ENCODE measurements at regions of chr17 and their contacts with region 1.

Region 1: DNA sequence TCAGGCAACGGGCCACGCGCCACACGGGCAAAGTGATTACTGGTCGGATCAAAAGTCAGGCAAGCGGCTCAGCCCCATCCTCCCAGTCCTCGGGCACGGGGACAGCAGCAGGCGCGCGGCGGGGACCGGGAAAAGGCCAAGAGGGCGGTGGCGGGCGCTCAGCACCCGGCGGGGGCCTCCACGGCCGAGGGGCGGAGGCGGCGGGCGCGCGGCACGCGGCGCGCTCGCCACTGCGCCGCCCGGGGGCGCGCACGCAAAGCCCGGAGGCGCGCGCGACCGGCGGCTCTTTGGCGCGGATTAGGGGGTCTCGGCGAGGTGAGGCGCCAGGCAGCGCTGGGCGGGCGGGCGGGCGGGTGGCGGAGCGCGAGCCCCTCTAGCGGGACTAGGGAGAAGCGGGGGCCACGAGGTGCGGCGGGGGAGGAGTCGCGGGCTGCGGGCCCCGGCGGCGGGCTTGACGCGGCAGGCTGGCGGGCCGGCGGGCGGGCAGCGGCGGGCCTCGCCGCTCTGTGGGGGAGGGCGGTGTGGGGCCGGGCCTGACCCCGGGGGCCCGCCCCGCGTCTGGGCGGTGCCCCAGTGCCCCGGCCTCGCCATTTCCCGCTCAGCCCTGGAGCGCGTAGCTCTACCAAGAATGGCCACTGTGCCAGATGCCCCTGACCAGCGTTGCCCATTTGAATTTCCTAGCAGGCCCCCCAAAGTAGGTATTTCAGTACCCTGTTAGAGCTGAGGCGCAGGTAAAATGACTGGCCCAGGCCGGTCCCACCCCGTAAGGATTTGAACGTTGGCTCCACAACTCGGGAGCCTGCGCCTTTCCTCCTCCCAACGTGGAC is at the starts of genes ACACA and TADA2A:
- DNase-seq: peak; percentile 94
- H3K4me3 Mint-ChIP-seq: peak within 1 kb of the TSS; percentile 98
- H3K27ac Mint-ChIP-seq: peak within 1 kb of the TSS; percentile 98
- H3K4me1 Mint-ChIP-seq: peaks cover 50% of the 10 kb centered on the region
- H3K27me3 Mint-ChIP-seq: no peaks in the 10 kb centered on the region
- total RNA-seq, gene ACACA: 120 and 122 TPM in 2 replicates
- total RNA-seq, gene TADA2A: 43.2 and 46.7 TPM in 2 replicates

Region 2: GRCh38 chr17:37358830-37359681 is 47.8 kb before region 1 on chr17:
- intact Hi-C with region 1: loop called (anchors 1 kb)
- DNase-seq: peak; percentile 97
- H3K4me3 Mint-ChIP-seq: peak overlapping the region; percentile 97
- H3K27ac Mint-ChIP-seq: peak overlapping the region; percentile 93
- H3K4me1 Mint-ChIP-seq: peaks cover 25% of the 10 kb centered on the region
- H3K27me3 Mint-ChIP-seq: no peaks in the 10 kb centered on the region

Region 3: GRCh38 chr17:37489197-37490001 is 82.6 kb after region 1 on chr17 and contains the start of gene DUSP14:
- intact Hi-C with region 1: loop called (anchors 2 kb)
- DNase-seq: peak; percentile 95
- H3K4me3 Mint-ChIP-seq: peak within 1 kb of the TSS; percentile 92
- H3K27ac Mint-ChIP-seq: peak within 1 kb of the TSS; percentile 97
- H3K4me1 Mint-ChIP-seq: peaks cover 39% of the 10 kb centered on the region
- H3K27me3 Mint-ChIP-seq: no peaks in the 10 kb centered on the region
- total RNA-seq, gene DUSP14: 18.7 and 20.2 TPM in 2 replicates

Region 4: DNA sequence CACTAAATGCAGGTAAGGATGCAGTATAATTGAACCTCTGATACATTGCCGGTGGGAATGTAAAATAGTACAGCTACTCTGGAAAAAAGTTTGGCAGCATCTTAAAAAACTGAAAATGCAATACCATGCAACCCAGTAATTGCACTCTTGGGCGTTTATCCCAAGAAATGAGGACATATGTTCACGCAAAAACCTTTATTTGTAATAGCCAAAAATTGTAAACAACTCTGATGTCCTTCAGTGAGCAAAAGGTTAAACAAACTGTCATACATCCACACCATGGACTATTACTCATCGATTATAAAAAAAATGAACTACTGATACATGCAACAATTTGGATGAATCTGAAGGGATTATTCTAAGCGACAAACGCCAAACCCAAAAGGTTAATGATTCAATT is 185.4 kb after region 1 on chr17:
- intact Hi-C with region 1: no loop called
- DNase-seq: no peak
- H3K4me3 Mint-ChIP-seq: no peak overlapping the region
- H3K27ac Mint-ChIP-seq: no peak overlapping the region
- H3K4me1 Mint-ChIP-seq: peaks cover 24% of the 10 kb centered on the region
- H3K27me3 Mint-ChIP-seq: no peaks in the 10 kb centered on the region

Region 5: GRCh38 chr17:37844158-37844976 is 437.5 kb after region 1 on chr17:
- intact Hi-C with region 1: loop called (anchors 10 kb)
- DNase-seq: peak; percentile 88
- H3K4me3 Mint-ChIP-seq: peak overlapping the region; percentile 51
- H3K27ac Mint-ChIP-seq: peak overlapping the region; percentile 58
- H3K4me1 Mint-ChIP-seq: peaks cover 27% of the 10 kb centered on the region
- H3K27me3 Mint-ChIP-seq: peaks cover 8% of the 10 kb centered on the region